ENCODE measurements at regions of chr14 and their contacts with region 1.

Region 1: DNA sequence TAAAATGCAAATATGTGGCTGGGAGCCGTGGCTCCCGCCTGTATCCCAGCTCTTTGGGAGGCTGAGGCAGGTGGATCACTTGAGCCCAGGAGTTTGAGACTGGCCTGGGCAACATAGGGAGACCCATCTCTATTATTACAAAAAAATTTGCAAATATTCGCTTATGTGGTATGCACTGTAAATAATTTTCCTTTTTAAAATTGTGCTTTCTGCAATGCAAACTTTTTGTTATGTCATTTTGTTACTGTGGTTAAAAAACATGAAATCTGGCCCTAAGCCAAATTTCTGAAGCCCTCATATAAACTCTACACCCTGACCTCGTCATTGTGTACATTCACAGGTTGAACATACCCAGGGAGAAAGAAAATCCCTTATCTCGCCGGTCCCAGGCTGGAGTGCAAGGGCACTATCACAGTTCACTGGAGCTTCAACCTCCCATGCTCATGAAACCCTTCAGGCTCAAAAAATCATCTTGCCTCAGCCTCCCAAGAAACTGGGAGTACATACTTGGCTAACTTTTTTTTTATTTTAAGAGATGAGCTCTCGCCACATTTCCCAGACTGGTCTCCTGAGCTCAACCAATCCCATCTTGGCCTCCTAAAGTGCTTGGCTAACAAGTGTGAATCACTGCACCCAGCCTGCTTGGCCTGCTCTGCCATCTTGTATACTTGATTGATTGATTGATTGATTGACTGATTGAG is 24.7 kb downstream of the TRAPPC6B start:
- DNase-seq: no peak
- H3K4me3 ChIP-seq: no peak overlapping the region
- H3K27ac ChIP-seq: no peak overlapping the region
- H3K4me1 ChIP-seq: no peaks in the 10 kb centered on the region
- H3K27me3 ChIP-seq: no peaks in the 10 kb centered on the region
- CTCF ChIP-seq: no peak

Region 2: GRCh38 chr14:39339003-39339402 is 193.6 kb after region 1 on chr14:
- CTCF ChIA-PET with region 1: no interaction called
- dilution Hi-C with region 1: no loop called
- in situ Hi-C with region 1: loop called in 1 of 2 experiments (anchors 25 kb)
- intact Hi-C with region 1: no loop called
- DNase-seq: no peak
- H3K4me3 ChIP-seq: no peak overlapping the region
- H3K27ac ChIP-seq: no peak overlapping the region
- H3K4me1 ChIP-seq: no peaks in the 10 kb centered on the region
- H3K27me3 ChIP-seq: no peaks in the 10 kb centered on the region
- CTCF ChIP-seq: no peak

Measured in mammary epithelial cell (primary cell).